SK-N-SH (cell line): ENCODE measurements at regions of chr6 and their contacts with region 1.

Region 1: GRCh38 chr6:125790358-125791150 is at the start of gene NCOA7:
- DNase-seq: peak; percentile 93
- H3K4me3 ChIP-seq: peak within 1 kb of the TSS; percentile 67 to 92
- H3K27ac ChIP-seq: peak within 1 kb of the TSS; percentile 86 to 97
- H3K4me1 ChIP-seq: peaks cover 37 to 44% of the 10 kb centered on the region in 2 experiments
- H3K27me3 ChIP-seq: no peaks in the 10 kb centered on the region
- CTCF ChIP-seq: peak; percentile 10; the same call in 1 of the 2 replicates
- EP300 ChIP-seq: no peak; a peak in 1 of 4 replicates
- RAD21 ChIP-seq: no peak; the same call in 1 of the 2 replicates
- polyA plus RNA-seq, gene NCOA7: 16.3 and 19.6 TPM in 2 replicates

Region 2: DNA sequence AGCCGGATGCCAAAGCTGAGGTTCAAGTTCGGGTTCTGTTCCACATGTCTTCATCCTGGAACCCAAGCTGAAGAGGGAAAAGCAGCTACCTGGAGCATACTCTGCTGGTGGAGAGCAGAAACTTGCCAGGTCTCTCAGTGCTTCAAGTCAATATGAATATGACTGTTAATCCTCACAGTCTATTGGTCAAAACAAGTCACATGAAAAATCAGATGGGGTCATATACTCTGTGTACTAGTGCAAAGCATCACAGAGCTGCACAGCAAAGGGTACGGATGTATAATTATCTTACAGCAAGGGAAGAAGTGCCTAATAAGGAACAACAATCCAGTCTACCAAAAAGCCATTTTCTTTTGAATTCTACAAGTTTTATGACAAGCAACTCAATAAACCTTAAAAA is 11.8 kb after region 1 on chr6:
- CTCF ChIA-PET with region 1: interaction called, 13 read pairs
- POLR2A ChIA-PET with region 1: interaction called, 5 read pairs
- DNase-seq: no peak
- H3K4me3 ChIP-seq: no peak overlapping the region
- H3K27ac ChIP-seq: peak overlapping the region in 1 of 2 experiments; percentile 63; a peak in 1 of 4 replicates
- H3K4me1 ChIP-seq: peaks cover 15 to 22% of the 10 kb centered on the region in 2 experiments; a peak in 3 of 4 replicates
- H3K27me3 ChIP-seq: no peaks in the 10 kb centered on the region
- CTCF ChIP-seq: no peak
- EP300 ChIP-seq: no peak
- RAD21 ChIP-seq: no peak

Region 3: DNA sequence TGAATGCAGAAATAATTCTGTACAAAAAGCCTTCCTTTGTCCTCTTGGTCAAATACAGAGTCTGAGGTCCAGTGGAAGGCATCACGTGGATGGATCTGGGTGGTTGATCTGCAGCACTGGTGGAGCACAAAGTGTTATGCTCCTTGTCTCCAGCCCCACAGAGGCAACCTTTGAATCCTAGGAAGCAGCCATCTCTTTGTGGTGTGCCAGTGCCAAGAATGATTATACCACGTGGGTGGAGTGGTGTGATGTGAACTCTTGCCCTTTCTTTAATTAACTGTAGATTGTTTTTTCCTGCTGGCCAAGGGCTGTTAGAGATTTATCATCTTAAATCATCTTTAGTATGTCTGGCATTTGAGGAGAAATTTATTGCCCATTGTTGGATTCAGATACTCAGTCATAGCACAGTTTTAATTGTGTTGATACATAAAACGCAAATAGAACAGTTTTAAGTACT is 31.3 kb after region 1 on chr6:
- CTCF ChIA-PET with region 1: interaction called, 31 read pairs
- POLR2A ChIA-PET with region 1: interaction called, 14 read pairs
- DNase-seq: peak; percentile 21
- H3K4me3 ChIP-seq: no peak overlapping the region
- H3K27ac ChIP-seq: peak overlapping the region in 1 of 2 experiments; percentile 90; a peak in 2 of 4 replicates
- H3K4me1 ChIP-seq: peaks cover 14 to 41% of the 10 kb centered on the region in 2 experiments; a peak in 3 of 4 replicates
- H3K27me3 ChIP-seq: no peaks in the 10 kb centered on the region
- CTCF ChIP-seq: no peak
- EP300 ChIP-seq: peak in 1 of 2 experiments; percentile 74; a peak in 2 of 4 replicates
- RAD21 ChIP-seq: 0 out of 2 replicates have a peak, but pooled peaks have one; percentile 6

Region 4: DNA sequence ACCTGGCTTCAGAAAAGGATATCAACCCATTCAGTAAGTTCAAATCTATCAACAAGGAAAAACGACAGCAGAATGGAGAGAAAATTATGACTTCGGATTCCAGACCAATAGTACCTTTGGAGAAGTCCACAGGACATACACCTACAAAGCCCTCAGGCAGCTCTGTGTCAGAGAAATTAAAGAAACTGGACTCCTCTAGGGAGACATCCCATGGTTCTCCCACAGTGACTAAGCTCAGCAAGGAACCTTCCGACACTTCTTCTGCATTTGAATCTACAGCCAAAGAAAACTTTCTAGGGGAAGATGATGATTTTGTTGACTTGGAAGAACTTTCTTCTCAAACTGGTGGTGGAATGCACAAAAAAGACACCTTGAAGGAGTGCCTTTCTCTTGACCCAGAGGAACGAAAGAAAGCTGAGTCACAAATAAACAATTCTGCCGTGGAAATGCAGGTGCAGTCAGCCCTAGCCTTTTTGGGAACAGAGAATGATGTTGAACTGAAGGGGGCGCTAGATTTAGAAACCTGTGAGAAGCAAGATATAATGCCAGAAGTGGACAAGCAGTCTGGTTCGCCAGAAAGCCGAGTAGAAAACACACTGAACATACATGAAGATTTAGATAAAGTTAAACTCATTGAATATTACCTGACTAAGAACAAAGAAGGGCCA is 98.6 kb after region 1 on chr6:
- CTCF ChIA-PET with region 1: interaction called, 23 read pairs
- POLR2A ChIA-PET with region 1: interaction called, 8 read pairs
- DNase-seq: no peak
- H3K4me3 ChIP-seq: no peak overlapping the region
- H3K27ac ChIP-seq: no peak overlapping the region
- H3K4me1 ChIP-seq: peaks cover 0 to 16% of the 10 kb centered on the region in 2 experiments; a peak in 2 of 4 replicates
- H3K27me3 ChIP-seq: no peaks in the 10 kb centered on the region
- CTCF ChIP-seq: peak; percentile 53
- EP300 ChIP-seq: no peak
- RAD21 ChIP-seq: no peak

Region 5: GRCh38 chr6:125974214-125974866 is 183.8 kb after region 1 on chr6:
- CTCF ChIA-PET with region 1: interaction called, 32 read pairs
- POLR2A ChIA-PET with region 1: interaction called, 3 read pairs
- DNase-seq: peak; percentile 34
- H3K4me3 ChIP-seq: no peak overlapping the region
- H3K27ac ChIP-seq: no peak overlapping the region
- H3K4me1 ChIP-seq: no peaks in the 10 kb centered on the region
- H3K27me3 ChIP-seq: no peaks in the 10 kb centered on the region
- CTCF ChIP-seq: peak; percentile 74
- EP300 ChIP-seq: no peak
- RAD21 ChIP-seq: peak; percentile 80